ENCODE measurements at regions of chr18 and their contacts with region 1.

Region 1: GRCh38 chr18:72544092-72544886 is at the start of gene CBLN2:
- ATAC-seq: peak; percentile 60 to 96 (median 82)
- H3K4me3 ChIP-seq: peak within 1 kb of the TSS; percentile 32 to 49 (median 43)
- H3K27ac ChIP-seq: no peak within 1 kb of the TSS
- H3K4me1 ChIP-seq: no peaks in the 10 kb centered on the region
- total RNA-seq, gene CBLN2: 1.2 to 23.8 (median 6.9) TPM in 7 of 8 experiments, not detected in the other

Region 2: DNA sequence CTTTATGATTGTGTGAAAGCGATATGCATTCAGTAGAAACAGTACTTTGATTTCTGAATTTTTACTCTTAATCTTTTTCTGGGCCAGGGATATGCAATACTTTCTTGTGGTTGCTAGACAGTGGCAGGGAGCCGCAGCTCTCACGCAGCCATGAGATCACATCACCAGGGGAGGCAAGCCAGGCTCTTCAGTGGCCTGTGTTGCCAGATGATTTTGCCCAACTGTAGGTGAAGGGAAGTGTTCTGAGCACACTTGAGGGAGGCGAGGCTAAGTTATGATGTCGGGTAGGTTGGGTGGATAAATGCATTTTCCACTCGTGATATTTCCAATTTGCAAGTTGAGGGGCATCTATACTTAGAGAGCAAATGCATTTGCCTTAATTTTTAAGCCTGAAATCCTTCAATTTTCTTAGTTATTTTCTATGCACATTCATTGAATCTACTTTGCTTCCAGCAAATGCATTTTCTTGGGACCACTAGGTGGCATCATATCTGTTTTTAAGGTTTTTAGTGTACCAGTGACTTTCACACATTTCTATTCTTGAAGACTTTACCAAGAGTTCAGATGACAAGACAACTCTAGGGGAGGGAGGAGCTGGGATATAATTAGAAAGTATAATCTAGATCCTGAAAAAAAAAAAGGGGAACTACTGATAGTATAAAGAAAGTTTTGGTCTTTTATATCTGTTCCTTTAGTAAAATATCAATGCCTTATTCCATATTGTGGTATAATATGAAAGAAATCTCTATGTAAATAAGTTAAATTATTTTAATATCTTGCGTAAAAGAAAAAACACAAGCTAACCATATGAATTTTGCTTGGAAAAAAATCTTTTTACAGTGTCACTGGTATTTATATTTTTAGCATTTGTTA is 1612.1 kb before region 1 on chr18:
- in situ Hi-C with region 1: loop called in 4 of 9 experiments (anchors 25 kb)
- ATAC-seq: peak in 6 of 8 experiments; percentile 28 to 64 (median 36)
- H3K4me3 ChIP-seq: no peak overlapping the region
- H3K27ac ChIP-seq: no peak overlapping the region
- H3K4me1 ChIP-seq: no peaks in the 10 kb centered on the region

Region 3: DNA sequence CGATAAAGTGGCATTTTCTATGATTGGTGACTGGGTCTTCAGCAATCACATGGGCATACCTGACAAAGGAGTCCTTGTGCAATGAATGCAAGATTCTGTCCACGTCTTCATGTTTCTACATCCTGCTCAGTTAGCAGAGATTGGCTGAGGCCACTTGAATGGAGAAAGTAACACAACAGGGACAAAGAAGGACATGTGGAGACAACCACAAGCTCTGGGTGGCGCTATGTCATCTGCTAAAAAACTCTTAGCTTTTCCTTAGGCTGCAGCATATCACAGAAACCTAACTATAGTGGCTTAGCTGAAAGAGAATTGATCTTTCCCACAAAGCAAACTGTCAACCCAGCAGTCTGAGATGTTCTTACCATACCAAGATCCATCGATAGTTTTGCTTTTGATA is 1145.8 kb before region 1 on chr18:
- in situ Hi-C with region 1: loop called in 1 of 9 experiments (anchors 25 kb)
- ATAC-seq: peak in 5 of 8 experiments; percentile 47 to 87 (median 58)
- H3K4me3 ChIP-seq: no peak overlapping the region
- H3K27ac ChIP-seq: no peak overlapping the region
- H3K4me1 ChIP-seq: peaks cover 0 to 6% of the 10 kb centered on the region in 2 donors

Region 4: GRCh38 chr18:72013427-72013850 is 530.9 kb before region 1 on chr18:
- in situ Hi-C with region 1: no loop called
- ATAC-seq: peak in 5 of 8 experiments; percentile 42 to 95 (median 82)
- H3K4me3 ChIP-seq: no peak overlapping the region
- H3K27ac ChIP-seq: no peak overlapping the region
- H3K4me1 ChIP-seq: peaks cover 0 to 9% of the 10 kb centered on the region in 2 donors

Region 5: DNA sequence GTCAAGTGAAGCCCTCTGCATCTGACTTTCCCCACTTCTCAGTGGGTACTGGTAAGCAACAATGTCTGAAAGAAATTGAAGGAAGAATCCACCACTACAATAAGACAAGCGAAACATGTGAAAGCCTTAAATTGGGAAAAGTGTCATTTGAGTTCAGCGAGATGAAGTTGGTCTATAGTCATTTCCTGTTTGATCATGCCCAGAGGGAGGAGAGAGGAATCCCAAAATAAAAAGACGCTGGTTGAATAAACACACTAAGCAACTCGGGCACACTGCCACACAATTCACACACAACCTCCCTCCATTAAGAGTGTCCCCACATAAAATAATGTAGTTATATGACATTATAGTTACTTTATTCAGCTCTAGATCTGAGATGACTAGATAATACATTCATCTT is 166.3 kb before region 1 on chr18:
- in situ Hi-C with region 1: no loop called
- ATAC-seq: no peak
- H3K4me3 ChIP-seq: no peak overlapping the region
- H3K27ac ChIP-seq: no peak overlapping the region
- H3K4me1 ChIP-seq: peaks cover 0 to 4% of the 10 kb centered on the region in 2 donors

Measured in motor neuron (in vitro differentiated cells).